PC-3 (cell line): ENCODE measurements at regions of chr6 and their contacts with region 1.

Region 1: DNA sequence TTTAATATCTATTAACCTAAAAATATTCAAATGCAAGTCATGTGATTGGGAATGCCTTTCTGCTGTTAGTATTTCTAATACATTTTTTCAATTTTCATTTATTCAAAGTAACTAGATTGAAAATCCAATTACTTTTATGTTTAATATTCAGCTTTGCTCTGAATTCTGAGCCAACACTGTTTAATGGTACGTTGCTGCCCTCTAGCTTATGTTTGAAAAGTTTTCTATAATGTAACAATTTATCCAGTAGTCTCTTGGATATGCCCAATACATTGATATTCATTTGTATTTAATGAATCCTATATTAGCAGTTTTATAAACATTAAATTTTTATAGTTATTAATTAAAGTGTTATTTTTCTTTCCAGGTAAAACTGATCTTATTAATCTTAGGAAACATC is 47.4 kb downstream of the LGSN start:
- DNase-seq: peak; percentile 48
- ATAC-seq: no peak
- H3K4me3 ChIP-seq: no peak overlapping the region
- H3K27ac ChIP-seq: no peak overlapping the region
- H3K4me1 ChIP-seq: no peaks in the 10 kb centered on the region
- H3K27me3 ChIP-seq: peaks cover 19% of the 10 kb centered on the region; the same call in 1 of the 2 replicates
- CTCF ChIP-seq: peak; percentile 58

Region 2: DNA sequence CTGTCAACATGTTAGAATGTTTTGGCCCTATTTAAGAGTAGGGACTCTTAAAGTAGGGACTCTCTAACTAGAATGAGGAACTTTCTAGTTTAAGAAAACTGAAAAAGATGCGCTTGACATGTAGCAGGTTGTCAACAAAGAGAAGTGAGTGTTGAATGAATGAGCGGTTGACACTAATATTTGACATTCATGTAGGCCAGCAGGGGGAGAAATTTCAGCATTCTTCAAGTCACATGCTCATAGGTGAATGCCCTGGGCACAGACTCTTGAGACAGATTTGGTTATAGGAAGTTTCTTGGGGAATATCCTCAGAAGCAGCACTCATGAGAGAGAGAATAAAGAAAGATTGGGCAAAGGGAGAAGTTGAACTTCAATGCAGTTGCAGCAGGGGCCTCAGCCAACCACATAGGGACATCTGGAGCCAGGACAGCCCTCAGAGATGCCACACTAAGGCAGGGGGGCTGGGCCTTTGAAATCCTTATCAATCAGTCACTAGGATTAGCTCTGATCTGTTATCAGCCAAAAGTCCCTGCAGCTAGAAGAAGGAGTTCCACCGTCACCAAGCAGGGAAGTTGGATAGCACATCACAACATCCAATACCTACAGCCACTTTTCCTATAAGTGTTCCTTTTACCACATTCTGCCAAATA is 206.2 kb before region 1 on chr6:
- CTCF ChIA-PET with region 1: no interaction called
- POLR2A ChIA-PET with region 1: no interaction called
- intact Hi-C with region 1: loop called (anchors 1 kb)
- DNase-seq: peak; percentile 6
- ATAC-seq: no peak
- H3K4me3 ChIP-seq: no peak overlapping the region
- H3K27ac ChIP-seq: no peak overlapping the region
- H3K4me1 ChIP-seq: no peaks in the 10 kb centered on the region
- H3K27me3 ChIP-seq: no peaks in the 10 kb centered on the region
- CTCF ChIP-seq: peak; percentile 39; the same call in 1 of the 2 replicates

Region 3: GRCh38 chr6:63368347-63368746 is 96.0 kb after region 1 on chr6:
- CTCF ChIA-PET with region 1: no interaction called
- POLR2A ChIA-PET with region 1: no interaction called
- intact Hi-C with region 1: no loop called
- DNase-seq: no peak
- ATAC-seq: no peak
- H3K4me3 ChIP-seq: no peak overlapping the region
- H3K27ac ChIP-seq: no peak overlapping the region
- H3K4me1 ChIP-seq: no peaks in the 10 kb centered on the region
- H3K27me3 ChIP-seq: no peaks in the 10 kb centered on the region
- CTCF ChIP-seq: no peak